Posterior cingulate gyrus (tissue), 11 donors: ENCODE measurements at regions of chr3 and their contacts with region 1.

Region 1: GRCh38 chr3:9362731-9363530 is at the start of gene THUMPD3:
- DNase-seq: peak; percentile 92 to 99 (median 95)

Region 2: GRCh38 chr3:9396700-9397521 is 34.0 kb after region 1 on chr3:
- intact Hi-C with region 1: loop called (anchors 5 kb)
- DNase-seq: peak; percentile 97 to 100 (median 98)